ENCODE measurements at regions of chr3 and their contacts with region 1.

Region 1: GRCh38 chr3:184017672-184018423 is at the start of gene ABCC5:
- DNase-seq: peak; percentile 95
- ATAC-seq: peak; percentile 98 to 99
- total RNA-seq, gene ABCC5: 40.2 to 69.2 TPM

Region 2: GRCh38 chr3:184135149-184135910 is 117.5 kb after region 1 on chr3 and contains the start of gene EIF2B5:
- intact Hi-C with region 1: loop called in 1 of 2 experiments (anchors 2 kb)
- DNase-seq: peak; percentile 94
- ATAC-seq: peak; percentile 95 to 96
- total RNA-seq, gene EIF2B5: 29.1 to 30.5 TPM

Region 3: GRCh38 chr3:184241447-184242296 is 223.8 kb after region 1 on chr3:
- intact Hi-C with region 1: loop called in 1 of 2 experiments (anchors 5 kb)
- DNase-seq: no peak
- ATAC-seq: peak; percentile 58 to 76